Common myeloid progenitor, CD34-positive (primary cell): ENCODE measurements at regions of chr9 and their contacts with region 1.

Region 1: GRCh38 chr9:69044240-69045219 is 9.0 kb downstream of the FXN start:
- DNase-seq: peak in 2 of 3 donors; percentile 24 to 35
- H3K4me3 ChIP-seq: no peak overlapping the region
- H3K27ac ChIP-seq: no peak overlapping the region
- H3K4me1 ChIP-seq: peaks cover 0 to 28% (median 22%) of the 10 kb centered on the region in 4 experiments
- H3K27me3 ChIP-seq: no peaks in the 10 kb centered on the region

Region 2: GRCh38 chr9:68841276-68842052 is 203.1 kb before region 1 on chr9:
- CTCF ChIA-PET with region 1: no interaction called
- POLR2A ChIA-PET with region 1: no interaction called
- DNase-seq: no peak
- H3K4me3 ChIP-seq: no peak overlapping the region
- H3K27ac ChIP-seq: no peak overlapping the region
- H3K4me1 ChIP-seq: peaks cover 4 to 18% (median 13%) of the 10 kb centered on the region in 4 experiments
- H3K27me3 ChIP-seq: no peaks in the 10 kb centered on the region

Region 3: DNA sequence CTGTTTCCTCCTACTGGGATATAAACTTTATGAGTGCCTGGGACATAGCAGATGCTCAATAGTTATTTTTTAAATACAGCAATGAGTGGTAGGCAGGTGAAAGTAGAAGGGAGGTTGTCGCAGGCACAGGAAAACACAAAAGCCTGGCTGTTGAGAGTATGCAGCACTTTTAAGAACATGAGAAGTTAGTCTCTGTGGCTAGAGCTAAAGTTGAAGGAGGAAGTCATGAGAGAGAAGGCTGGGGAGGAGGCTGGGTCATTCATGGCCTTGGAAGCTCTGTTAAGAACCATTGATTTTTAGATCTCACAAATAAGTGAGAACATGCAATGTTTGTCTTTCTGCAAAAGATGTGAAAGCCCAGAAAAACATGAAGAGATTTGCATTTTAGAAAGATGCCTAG is 157.3 kb before region 1 on chr9:
- CTCF ChIA-PET with region 1: no interaction called
- POLR2A ChIA-PET with region 1: no interaction called
- DNase-seq: peak in 2 of 3 donors; percentile 34 to 38
- H3K4me3 ChIP-seq: no peak overlapping the region
- H3K27ac ChIP-seq: no peak overlapping the region
- H3K4me1 ChIP-seq: peaks cover 0 to 22% (median 14%) of the 10 kb centered on the region in 4 experiments
- H3K27me3 ChIP-seq: no peaks in the 10 kb centered on the region

Region 4: GRCh38 chr9:69107771-69108170 is 63.2 kb after region 1 on chr9:
- CTCF ChIA-PET with region 1: no interaction called
- POLR2A ChIA-PET with region 1: no interaction called
- DNase-seq: no peak
- H3K4me3 ChIP-seq: no peak overlapping the region
- H3K27ac ChIP-seq: no peak overlapping the region
- H3K4me1 ChIP-seq: no peaks in the 10 kb centered on the region
- H3K27me3 ChIP-seq: no peaks in the 10 kb centered on the region

Region 5: GRCh38 chr9:69199769-69200470 is 155.4 kb after region 1 on chr9:
- CTCF ChIA-PET with region 1: interaction called, 244 read pairs
- POLR2A ChIA-PET with region 1: no interaction called
- DNase-seq: peak in 2 of 3 donors; percentile 42 to 50
- H3K4me3 ChIP-seq: no peak overlapping the region
- H3K27ac ChIP-seq: no peak overlapping the region
- H3K4me1 ChIP-seq: peaks cover 0 to 11% (median 10%) of the 10 kb centered on the region in 4 experiments
- H3K27me3 ChIP-seq: no peaks in the 10 kb centered on the region

Region 6: DNA sequence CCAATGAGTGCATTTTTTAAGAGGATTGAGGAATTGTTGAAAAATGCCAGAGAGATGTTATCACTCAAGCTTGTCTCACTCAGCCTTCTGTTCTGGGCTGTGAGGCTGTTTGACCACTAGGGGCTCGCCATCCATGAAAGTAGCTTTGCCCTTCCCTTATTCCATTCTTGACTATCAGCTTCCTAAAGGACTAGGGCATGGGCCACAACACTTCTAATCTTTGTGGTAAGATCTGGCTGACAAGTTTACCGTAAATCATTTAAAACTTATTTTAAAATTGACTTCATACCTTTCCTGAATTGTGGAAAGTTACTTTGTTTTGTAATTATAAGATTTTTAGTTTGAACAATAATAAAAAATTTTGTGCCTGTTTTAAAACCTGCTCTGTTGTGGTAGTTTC is 179.1 kb after region 1 on chr9:
- CTCF ChIA-PET with region 1: no interaction called
- POLR2A ChIA-PET with region 1: no interaction called
- DNase-seq: peak in 2 of 3 donors; percentile 39 to 45
- H3K4me3 ChIP-seq: no peak overlapping the region
- H3K27ac ChIP-seq: no peak overlapping the region
- H3K4me1 ChIP-seq: no peaks in the 10 kb centered on the region
- H3K27me3 ChIP-seq: no peaks in the 10 kb centered on the region